CD14-positive monocyte (primary cell): ENCODE measurements at regions of chr13 and their contacts with region 1.

Region 1: GRCh38 chr13:26482451-26483197 is 74.9 kb upstream of the WASF3 start:
- DNase-seq: peak; percentile 48 to 66 (median 65)
- H3K4me3 ChIP-seq: peak overlapping the region in 2 of 3 experiments; percentile 24 to 53
- H3K4me3 Mint-ChIP-seq: peak overlapping the region; percentile 51 to 79
- H3K27ac ChIP-seq: peak overlapping the region in 1 of 2 donors; percentile 38
- H3K27ac Mint-ChIP-seq: peak overlapping the region in 1 of 7 donors; percentile 26
- H3K4me1 ChIP-seq: peaks cover 0 to 4% of the 10 kb centered on the region in 2 donors
- H3K4me1 Mint-ChIP-seq: peaks cover 3% of the 10 kb centered on the region
- H3K27me3 ChIP-seq: no peaks in the 10 kb centered on the region
- H3K27me3 Mint-ChIP-seq: peaks cover 2 to 3% (median 2%) of the 10 kb centered on the region in 3 donors
- CTCF ChIP-seq: peak; percentile 86

Region 2: DNA sequence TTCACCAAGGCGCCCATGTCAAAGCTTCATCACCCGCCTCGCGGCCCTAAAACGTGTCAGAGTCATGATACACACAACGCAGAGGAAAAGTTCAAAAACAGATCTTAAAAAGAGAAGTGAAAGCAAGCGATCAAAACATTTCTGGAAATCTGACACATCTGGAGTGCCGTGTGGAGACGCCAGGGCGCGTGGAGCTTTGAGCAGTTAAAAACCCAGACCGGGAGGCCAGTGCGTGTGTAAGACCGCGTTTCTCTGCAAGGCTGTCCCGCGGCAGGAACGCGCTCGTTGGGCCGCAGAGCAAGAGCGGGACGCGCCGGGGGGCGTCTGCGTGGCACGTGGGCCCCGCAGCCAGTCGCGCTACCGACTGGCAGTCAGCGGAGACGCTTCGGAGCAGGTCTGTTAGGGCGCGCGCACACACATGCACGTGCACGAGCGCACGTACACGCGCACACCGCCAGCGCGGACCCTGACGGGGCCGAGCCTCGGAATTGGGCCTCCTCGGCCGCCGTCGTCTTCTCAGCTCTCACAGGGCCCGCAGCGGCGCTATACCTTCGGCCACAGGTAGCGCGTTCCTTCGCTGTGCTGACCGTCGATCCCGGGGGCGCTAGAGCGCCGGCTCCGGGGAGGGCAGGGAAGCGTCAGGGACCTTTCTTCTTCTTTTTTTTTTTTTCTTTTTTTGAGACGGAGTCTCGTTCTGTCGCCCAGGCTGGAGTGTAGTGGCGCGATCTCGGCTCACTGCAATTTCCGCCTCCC is 296.3 kb before region 1 on chr13:
- intact Hi-C with region 1: no loop called
- DNase-seq: peak; percentile 73 to 87 (median 83)
- H3K4me3 ChIP-seq: peak overlapping the region; percentile 42 to 86 (median 58)
- H3K4me3 Mint-ChIP-seq: peak overlapping the region; percentile 91 to 96
- H3K27ac ChIP-seq: peak overlapping the region; percentile 79 to 90
- H3K27ac Mint-ChIP-seq: peak overlapping the region; percentile 88 to 96 (median 95)
- H3K4me1 ChIP-seq: peaks cover 18 to 20% of the 10 kb centered on the region in 2 donors
- H3K4me1 Mint-ChIP-seq: peaks cover 28% of the 10 kb centered on the region
- H3K27me3 ChIP-seq: no peaks in the 10 kb centered on the region
- H3K27me3 Mint-ChIP-seq: peaks cover 0 to 5% (median 0%) of the 10 kb centered on the region in 3 donors
- CTCF ChIP-seq: peak; percentile 38

Region 3: DNA sequence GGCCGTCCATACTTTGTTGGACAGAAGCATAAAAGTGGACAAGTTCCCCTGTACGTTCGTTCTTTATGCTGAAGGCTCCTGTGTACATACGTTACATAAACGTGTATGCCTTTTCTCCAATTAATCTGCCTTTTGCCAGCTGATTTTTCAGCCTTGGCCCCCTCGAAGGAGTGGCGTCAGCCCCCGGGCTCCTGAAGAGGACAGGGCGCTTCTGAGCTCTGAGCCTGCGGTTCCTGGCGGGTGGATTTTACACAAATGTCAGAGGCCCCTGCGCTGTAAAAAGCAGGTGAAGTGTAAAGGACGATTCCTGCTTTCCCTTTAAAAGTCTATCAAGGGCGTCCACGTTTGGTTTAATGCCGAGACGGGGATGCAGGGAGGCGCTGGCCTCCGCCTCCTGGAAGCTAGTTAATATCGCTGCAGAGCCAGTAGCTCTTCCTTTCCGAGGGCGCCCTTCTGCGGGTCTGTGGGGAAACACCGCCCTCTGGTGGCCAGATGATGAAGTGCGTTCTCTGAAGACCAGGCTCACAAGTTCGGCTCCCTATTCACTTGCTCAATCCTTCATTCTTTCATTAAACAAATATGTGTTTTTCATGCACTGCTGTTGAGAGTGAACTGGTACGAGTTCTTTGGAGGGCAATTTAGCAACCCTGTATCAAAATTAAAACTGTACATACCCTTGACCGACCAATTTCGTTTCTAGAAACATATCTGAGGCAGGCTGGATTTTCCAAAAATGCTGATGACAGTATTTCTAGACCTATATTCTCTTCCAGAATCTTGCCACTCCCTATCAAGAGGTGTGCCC is 216.0 kb after region 1 on chr13:
- intact Hi-C with region 1: loop called (anchors 5 to 10 kb)
- DNase-seq: peak; percentile 51 to 64 (median 56)
- H3K4me3 ChIP-seq: no peak overlapping the region
- H3K4me3 Mint-ChIP-seq: peak overlapping the region in 1 of 2 donors; percentile 35
- H3K27ac ChIP-seq: no peak overlapping the region
- H3K27ac Mint-ChIP-seq: no peak overlapping the region
- H3K4me1 ChIP-seq: no peaks in the 10 kb centered on the region
- H3K4me1 Mint-ChIP-seq: peaks cover 3% of the 10 kb centered on the region
- H3K27me3 ChIP-seq: peaks cover 0 to 3% of the 10 kb centered on the region in 2 donors
- H3K27me3 Mint-ChIP-seq: peaks cover 5 to 18% (median 11%) of the 10 kb centered on the region in 3 donors
- CTCF ChIP-seq: peak; percentile 96